ENCODE measurements at regions of chr18 and their contacts with region 1.

Region 1: GRCh38 chr18:74412116-74412880 is 44.8 kb downstream of the DIPK1C start:
- DNase-seq: peak; percentile 66 to 97 (median 78)

Region 2: GRCh38 chr18:74450626-74451025 is 38.3 kb after region 1 on chr18:
- intact Hi-C with region 1: loop called (anchors 5 kb)
- DNase-seq: peak in 8 of 10 donors; percentile 22 to 91 (median 48)

Region 3: DNA sequence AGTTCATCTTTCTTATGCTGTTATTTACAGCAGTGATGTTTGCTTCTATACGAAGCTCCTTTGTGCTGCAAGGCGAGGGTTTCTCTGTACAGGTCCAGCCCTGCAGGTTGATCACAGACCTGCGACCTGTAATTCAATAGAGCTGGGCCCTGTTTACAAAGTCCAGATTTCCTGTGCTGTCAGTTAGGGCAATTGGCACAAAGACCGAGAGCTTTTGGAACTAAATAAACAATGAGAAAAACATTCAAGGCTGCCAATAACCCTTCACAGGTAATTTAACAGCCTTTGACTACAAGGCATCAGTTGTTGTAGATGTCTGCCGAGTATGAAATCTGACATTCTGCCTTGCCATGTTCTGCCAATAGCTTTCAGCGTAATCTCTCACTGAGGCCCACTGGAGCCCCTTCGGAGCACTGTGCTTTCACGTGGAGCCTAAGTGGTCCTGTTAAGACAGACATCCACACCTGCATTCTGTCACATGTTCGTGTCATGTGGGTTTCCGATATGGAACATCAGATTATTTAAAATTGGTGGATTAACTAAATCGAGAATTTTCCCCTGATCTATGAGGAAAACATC is 564.1 kb after region 1 on chr18:
- intact Hi-C with region 1: no loop called
- DNase-seq: no peak

Measured in posterior cingulate gyrus (tissue), 11 donors.